ENCODE measurements at regions of chr10 and their contacts with region 1.

Region 1: DNA sequence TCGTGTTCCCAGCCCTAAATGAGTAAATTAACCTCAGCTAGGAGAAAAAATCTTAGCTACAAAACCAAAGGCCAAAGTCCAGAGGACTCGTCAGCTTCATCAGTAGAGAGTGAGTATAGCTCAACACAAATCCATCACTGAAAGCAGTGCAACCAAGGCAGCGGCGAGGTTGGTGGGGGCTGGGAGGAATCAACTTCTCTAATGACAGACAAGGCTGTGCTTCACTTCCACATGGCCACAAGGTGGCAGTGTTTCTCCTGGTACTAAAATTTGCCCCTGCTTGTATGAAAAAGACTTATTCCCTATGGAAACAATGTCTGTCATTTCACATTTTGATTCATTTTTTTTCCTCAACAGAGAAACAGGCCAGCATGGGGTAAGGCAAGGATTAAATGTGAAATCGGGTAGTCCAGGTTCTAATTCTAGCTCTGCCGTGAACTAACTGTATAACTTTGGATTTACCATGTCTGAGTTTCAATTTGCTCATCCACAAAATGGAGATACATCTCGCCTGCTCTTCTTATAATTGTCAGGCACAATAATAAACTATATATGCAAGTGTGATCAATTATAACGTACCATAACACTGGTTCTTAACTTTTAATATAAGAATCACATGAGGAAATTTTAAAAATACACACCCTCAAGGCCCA is 39.3 kb downstream of the FAS start:
- DNase-seq: peak; percentile 84
- ATAC-seq: peak; percentile 55
- H3K4me3 Mint-ChIP-seq: no peak overlapping the region
- H3K27ac Mint-ChIP-seq: no peak overlapping the region
- H3K4me1 Mint-ChIP-seq: peaks cover 40% of the 10 kb centered on the region
- H3K27me3 Mint-ChIP-seq: no peaks in the 10 kb centered on the region
- CTCF ChIP-seq: peak; percentile 94

Region 2: GRCh38 chr10:88996927-88997326 is 33.0 kb before region 1 on chr10:
- CTCF ChIA-PET with region 1: interaction called, 14 read pairs
- POLR2A ChIA-PET with region 1: interaction called, 3 read pairs
- intact Hi-C with region 1: no loop called
- DNase-seq: no peak
- ATAC-seq: peak; percentile 26
- H3K4me3 Mint-ChIP-seq: peak overlapping the region; percentile 9
- H3K27ac Mint-ChIP-seq: peak overlapping the region; percentile 16
- H3K4me1 Mint-ChIP-seq: peaks cover 73% of the 10 kb centered on the region
- H3K27me3 Mint-ChIP-seq: no peaks in the 10 kb centered on the region
- CTCF ChIP-seq: no peak

Region 3: DNA sequence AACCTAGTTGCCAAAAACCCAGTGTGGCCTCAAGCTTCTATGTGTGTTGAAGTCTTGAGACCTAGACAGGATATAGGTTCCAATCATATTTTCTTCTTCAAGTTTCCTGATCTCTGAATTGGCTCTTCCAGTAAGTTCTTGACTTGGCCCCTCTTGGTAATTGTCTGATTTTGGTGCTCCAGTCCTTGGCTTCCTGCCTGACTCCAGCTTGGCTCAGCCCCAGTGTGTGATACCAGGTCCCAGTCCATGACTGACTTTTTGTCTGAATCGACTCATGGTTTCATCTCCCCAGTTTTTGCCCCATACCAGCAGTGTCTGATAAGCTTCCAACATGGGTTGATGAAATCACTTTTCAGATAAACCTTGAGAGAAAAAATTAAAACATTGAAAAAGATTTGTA is 33.0 kb after region 1 on chr10:
- CTCF ChIA-PET with region 1: interaction called, 11 read pairs
- POLR2A ChIA-PET with region 1: no interaction called
- intact Hi-C with region 1: no loop called
- DNase-seq: no peak
- ATAC-seq: no peak
- H3K4me3 Mint-ChIP-seq: no peak overlapping the region
- H3K27ac Mint-ChIP-seq: no peak overlapping the region
- H3K4me1 Mint-ChIP-seq: no peaks in the 10 kb centered on the region
- H3K27me3 Mint-ChIP-seq: peaks cover 7% of the 10 kb centered on the region
- CTCF ChIP-seq: no peak

Region 4: GRCh38 chr10:89076120-89076519 is 46.2 kb after region 1 on chr10:
- CTCF ChIA-PET with region 1: interaction called, 19 read pairs
- POLR2A ChIA-PET with region 1: no interaction called
- intact Hi-C with region 1: no loop called
- DNase-seq: no peak
- ATAC-seq: peak; percentile 94
- H3K4me3 Mint-ChIP-seq: no peak overlapping the region
- H3K27ac Mint-ChIP-seq: no peak overlapping the region
- H3K4me1 Mint-ChIP-seq: peaks cover 20% of the 10 kb centered on the region
- H3K27me3 Mint-ChIP-seq: peaks cover 7% of the 10 kb centered on the region
- CTCF ChIP-seq: no peak

Region 5: DNA sequence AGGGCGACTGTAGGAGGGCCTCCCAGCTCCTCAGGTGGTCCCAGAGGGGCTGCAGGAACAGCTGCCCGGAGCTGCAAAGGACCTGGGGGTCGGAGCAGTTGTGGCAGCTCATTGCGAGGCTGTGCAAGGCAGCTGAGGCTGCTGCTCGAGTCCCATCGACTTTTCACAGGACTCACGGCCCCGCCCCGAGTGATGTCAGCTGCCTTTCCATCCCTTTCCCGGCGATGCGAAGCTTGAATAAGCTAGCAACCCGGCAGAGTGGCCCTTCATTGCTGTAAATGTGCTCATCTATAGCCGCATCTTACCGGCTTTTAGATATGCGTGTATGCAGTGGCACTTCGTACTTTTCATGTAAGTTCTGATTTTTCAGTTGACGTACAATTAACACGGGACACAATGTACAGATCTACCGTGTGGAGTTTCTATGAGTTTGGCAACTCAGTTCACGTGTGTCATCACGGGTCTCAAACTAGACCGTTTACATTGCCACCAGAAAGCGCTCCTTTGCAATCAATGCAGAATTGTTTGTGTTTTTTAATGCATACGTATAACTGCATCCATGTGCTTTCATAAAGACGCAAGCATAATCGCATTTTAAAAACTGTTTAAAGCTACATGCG is 177.4 kb after region 1 on chr10 and contains the start of gene CH25H:
- CTCF ChIA-PET with region 1: interaction called, 117 read pairs
- POLR2A ChIA-PET with region 1: interaction called, 3 read pairs
- intact Hi-C with region 1: no loop called
- DNase-seq: peak; percentile 68
- ATAC-seq: peak; percentile 65
- H3K4me3 Mint-ChIP-seq: peak within 1 kb of the TSS; percentile 69
- H3K27ac Mint-ChIP-seq: no peak within 1 kb of the TSS
- H3K4me1 Mint-ChIP-seq: peaks cover 10% of the 10 kb centered on the region
- H3K27me3 Mint-ChIP-seq: peaks cover 33% of the 10 kb centered on the region
- CTCF ChIP-seq: no peak
- total RNA-seq, gene CH25H: not detected

Region 6: DNA sequence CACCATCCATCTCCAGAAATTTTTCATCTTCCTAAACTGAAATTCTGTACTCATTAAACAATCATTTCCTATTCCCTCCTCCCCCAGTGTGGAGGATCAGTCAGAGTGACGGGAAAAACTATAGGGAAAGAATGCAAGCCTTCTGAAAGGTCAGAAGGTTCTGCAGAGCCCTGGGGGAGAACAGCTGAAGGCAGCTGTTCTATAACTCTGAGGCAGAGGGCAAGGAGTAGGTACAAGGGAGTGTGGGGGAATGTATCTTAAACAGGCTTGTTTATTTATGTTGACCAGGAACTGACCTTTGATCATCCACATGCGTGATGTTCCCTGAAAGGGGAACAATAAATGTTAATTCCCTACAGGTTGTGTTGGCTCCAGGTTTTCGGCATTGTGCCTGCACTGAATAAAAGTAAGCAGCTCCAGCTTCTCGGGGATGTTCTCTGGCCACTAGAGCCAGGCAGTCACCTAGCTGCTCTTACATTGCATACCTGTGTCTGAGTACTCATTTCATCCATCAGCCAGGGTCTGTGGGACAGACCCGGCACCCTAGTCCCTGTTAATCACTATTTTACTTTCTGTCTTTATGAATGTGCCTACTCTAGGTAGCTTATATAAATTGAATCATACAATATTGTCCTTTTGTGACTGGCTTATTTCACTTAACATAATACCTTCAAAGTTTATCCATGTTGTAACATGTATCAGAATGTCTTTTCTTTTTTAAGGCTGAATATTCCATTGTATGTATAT is 368.3 kb after region 1 on chr10:
- CTCF ChIA-PET with region 1: no interaction called
- POLR2A ChIA-PET with region 1: no interaction called
- intact Hi-C with region 1: no loop called
- DNase-seq: no peak
- ATAC-seq: no peak
- H3K4me3 Mint-ChIP-seq: no peak overlapping the region
- H3K27ac Mint-ChIP-seq: no peak overlapping the region
- H3K4me1 Mint-ChIP-seq: peaks cover 14% of the 10 kb centered on the region
- H3K27me3 Mint-ChIP-seq: no peaks in the 10 kb centered on the region
- CTCF ChIP-seq: no peak

Measured in activated CD8-positive, alpha-beta T cell treated with anti-CD3 and anti-CD28 coated beads for 36 hours (primary cell).